Mammary epithelial cell (primary cell): ENCODE measurements at regions of chr10 and their contacts with region 1.

Region 1: GRCh38 chr10:78047314-78047891 is 13.7 kb downstream of the RPS24 start:
- DNase-seq: peak; percentile 53
- H3K4me3 ChIP-seq: no peak overlapping the region
- H3K27ac ChIP-seq: no peak overlapping the region
- H3K4me1 ChIP-seq: no peaks in the 10 kb centered on the region
- H3K27me3 ChIP-seq: no peaks in the 10 kb centered on the region
- CTCF ChIP-seq: peak; percentile 92

Region 2: DNA sequence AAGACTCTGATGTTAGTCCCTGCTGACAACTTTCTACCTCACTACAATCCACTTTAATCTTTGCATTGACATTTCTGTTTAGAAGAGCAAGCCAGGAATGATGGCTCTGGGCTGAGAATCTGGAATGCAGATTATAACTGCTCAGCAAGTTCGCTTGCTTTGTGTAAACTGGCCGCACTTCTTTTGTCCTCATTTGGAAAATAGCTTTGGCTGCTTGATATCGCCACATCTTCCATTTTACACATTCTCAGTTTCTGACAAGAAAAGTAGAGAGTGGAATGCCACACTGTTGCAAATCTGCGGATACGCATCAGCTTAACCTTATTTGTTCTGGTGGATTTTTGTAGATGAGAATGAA is 839.6 kb before region 1 on chr10:
- CTCF ChIA-PET with region 1: no interaction called
- dilution Hi-C with region 1: no loop called
- in situ Hi-C with region 1: no loop called
- intact Hi-C with region 1: no loop called
- DNase-seq: no peak
- H3K4me3 ChIP-seq: no peak overlapping the region
- H3K27ac ChIP-seq: no peak overlapping the region
- H3K4me1 ChIP-seq: peaks cover 5% of the 10 kb centered on the region
- H3K27me3 ChIP-seq: no peaks in the 10 kb centered on the region
- CTCF ChIP-seq: no peak

Region 3: DNA sequence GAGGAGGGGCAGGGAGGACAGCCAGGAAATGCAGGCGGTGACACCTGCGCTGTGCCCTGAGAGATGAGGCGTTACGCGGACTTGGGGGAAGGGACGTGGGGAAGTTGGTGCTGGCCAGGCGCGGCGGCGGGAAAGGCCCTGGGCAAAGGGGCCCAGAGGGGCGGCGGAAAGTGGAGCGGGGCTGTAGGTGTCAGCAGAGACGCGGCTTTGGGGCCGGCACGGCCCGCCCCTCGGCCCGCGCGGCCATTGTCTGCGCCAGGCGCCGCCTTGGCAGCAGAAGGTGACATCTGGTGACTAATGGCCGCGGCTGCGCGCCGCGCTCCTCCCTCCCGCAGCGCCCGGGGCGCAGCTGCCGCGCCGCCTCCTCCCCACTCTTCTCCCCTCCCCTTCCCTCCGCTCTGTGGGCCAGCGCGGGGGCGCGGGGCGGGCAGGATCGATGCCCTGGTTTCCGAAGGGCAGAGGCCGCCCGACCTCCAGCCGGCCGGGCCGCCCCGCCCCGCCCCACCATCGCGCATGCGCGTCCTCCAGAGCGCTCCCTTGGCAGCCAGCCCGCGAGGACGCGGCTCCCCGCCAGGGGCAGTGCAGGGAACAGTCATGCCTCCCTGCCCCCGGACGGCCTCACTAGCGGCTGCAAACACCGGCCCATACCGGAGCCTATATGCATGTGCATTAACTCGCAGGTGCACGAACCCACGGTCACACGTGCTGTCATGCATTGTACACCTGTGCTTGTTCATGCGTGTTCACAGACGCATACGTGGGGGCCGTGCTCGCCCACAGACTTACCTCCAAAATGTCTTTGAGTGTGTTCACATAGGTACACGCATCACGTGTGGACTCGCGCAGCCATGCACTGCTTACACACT is 255.8 kb after region 1 on chr10:
- CTCF ChIA-PET with region 1: interaction called, 3 read pairs
- dilution Hi-C with region 1: loop called (anchors 10 kb)
- in situ Hi-C with region 1: loop called in 1 of 2 experiments (anchors 25 kb)
- intact Hi-C with region 1: loop called (anchors 1 kb)
- DNase-seq: peak; percentile 88
- H3K4me3 ChIP-seq: peak overlapping the region; percentile 53 to 65 (median 64)
- H3K27ac ChIP-seq: no peak overlapping the region
- H3K4me1 ChIP-seq: no peaks in the 10 kb centered on the region
- H3K27me3 ChIP-seq: no peaks in the 10 kb centered on the region
- CTCF ChIP-seq: peak; percentile 53 to 70

Region 4: GRCh38 chr10:78520737-78521430 is 473.5 kb after region 1 on chr10:
- CTCF ChIA-PET with region 1: no interaction called
- dilution Hi-C with region 1: no loop called
- in situ Hi-C with region 1: no loop called
- intact Hi-C with region 1: loop called (anchors 1 kb)
- DNase-seq: peak; percentile 73
- H3K4me3 ChIP-seq: no peak overlapping the region
- H3K27ac ChIP-seq: no peak overlapping the region
- H3K4me1 ChIP-seq: peaks cover 7% of the 10 kb centered on the region
- H3K27me3 ChIP-seq: no peaks in the 10 kb centered on the region
- CTCF ChIP-seq: peak; percentile 43 to 67

Region 5: GRCh38 chr10:78657163-78657861 is 609.9 kb after region 1 on chr10:
- CTCF ChIA-PET with region 1: no interaction called
- dilution Hi-C with region 1: loop called (anchors 5 kb)
- in situ Hi-C with region 1: no loop called
- intact Hi-C with region 1: loop called (anchors 1 kb)
- DNase-seq: peak; percentile 37
- H3K4me3 ChIP-seq: no peak overlapping the region
- H3K27ac ChIP-seq: no peak overlapping the region
- H3K4me1 ChIP-seq: no peaks in the 10 kb centered on the region
- H3K27me3 ChIP-seq: no peaks in the 10 kb centered on the region
- CTCF ChIP-seq: peak; percentile 78 to 95

Region 6: GRCh38 chr10:78972947-78973900 is 925.8 kb after region 1 on chr10:
- CTCF ChIA-PET with region 1: no interaction called
- dilution Hi-C with region 1: no loop called
- in situ Hi-C with region 1: no loop called
- intact Hi-C with region 1: loop called (anchors 5 kb)
- DNase-seq: peak; percentile 84
- H3K4me3 ChIP-seq: peak overlapping the region; percentile 15 to 43 (median 37)
- H3K27ac ChIP-seq: peak overlapping the region; percentile 79
- H3K4me1 ChIP-seq: peaks cover 41% of the 10 kb centered on the region
- H3K27me3 ChIP-seq: no peaks in the 10 kb centered on the region
- CTCF ChIP-seq: no peak